ENCODE measurements at regions of chr5 and their contacts with region 1.

Region 1: DNA sequence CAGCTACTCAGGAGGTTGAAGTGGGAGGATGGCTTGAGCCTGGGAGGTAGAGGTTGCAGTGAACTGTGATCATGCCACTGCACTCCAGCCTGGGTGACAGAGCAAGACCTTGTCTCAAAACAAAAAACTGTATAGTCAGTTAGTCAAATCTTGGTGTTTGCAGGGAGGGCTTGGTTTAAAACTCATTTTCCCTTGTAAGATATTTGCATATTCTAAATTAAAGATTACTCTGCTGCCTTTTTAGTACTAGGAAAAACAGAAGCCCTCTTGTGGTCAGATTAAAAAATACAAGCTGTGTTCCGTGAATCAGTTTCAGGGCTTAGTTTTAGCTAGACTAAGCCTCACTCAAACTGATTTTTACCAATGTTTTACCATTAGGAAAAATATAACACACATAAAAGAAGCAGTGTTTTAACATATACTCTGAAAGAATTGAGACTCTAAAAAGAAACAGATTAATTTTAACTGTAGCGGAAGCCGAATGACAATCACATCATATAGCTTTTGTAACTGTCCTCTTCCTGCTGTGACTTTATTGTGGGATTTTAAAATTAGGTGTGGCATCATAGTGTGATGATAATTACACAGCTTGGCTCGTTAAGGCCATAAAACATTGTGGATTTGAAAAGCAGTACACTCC is 84.9 kb upstream of the BASP1 start:
- DNase-seq: no peak

Region 2: GRCh38 chr5:16791036-16791705 is 341.4 kb before region 1 on chr5:
- intact Hi-C with region 1: loop called (anchors 5 kb)
- DNase-seq: peak in 2 of 10 donors; percentile 24 to 33

Region 3: GRCh38 chr5:16934123-16934522 is 198.4 kb before region 1 on chr5:
- intact Hi-C with region 1: loop called (anchors 10 kb)
- DNase-seq: peak in 2 of 10 donors; percentile 14 to 40

Region 4: GRCh38 chr5:17359451-17360011 is 227.0 kb after region 1 on chr5:
- intact Hi-C with region 1: no loop called
- DNase-seq: no peak

Measured in posterior cingulate gyrus (tissue), 11 donors.